ENCODE measurements at regions of chr4 and their contacts with region 1.

Region 1: DNA sequence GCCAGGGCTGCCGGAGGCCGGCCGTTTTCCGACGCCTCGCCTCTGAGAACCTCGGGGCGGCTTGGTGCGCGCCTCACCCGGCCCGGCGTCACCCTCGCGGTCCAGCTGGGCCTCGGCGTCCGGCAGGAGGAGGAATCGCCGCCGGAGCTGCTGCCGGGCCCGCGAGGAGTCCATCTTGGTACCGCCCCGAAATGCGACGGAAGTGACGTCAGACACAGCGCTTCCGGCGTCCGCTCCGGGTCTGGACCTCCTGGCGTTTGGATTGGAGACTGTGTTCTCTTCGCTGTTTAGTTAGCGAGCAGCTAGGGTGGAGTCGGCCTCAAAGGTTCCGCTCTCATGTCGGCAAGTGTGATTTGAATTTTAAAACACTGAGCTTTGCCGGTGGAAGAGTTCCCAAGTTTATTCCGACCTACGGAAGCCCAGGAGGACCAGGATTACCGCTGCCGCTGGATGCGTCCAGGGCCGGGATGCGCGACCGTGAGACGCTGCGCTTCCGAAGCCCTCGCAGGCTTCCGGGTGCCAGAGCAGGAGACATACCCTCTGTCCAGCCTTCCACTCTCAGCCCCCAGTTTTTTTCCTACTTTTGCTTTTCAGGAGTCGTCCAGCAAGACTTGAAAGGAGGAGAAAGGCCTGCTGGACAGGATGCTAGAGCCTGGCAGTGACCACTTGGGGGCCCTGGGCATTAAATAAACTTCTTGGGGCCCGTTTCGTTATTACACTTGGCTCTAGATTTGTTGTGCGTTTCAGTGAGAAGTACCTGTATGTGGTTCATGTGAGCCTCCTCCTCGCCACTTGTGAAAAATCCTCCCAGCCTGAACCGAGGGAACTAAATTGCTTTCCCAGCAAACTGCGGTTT is at the start of gene TMEM128:
- DNase-seq: peak; percentile 83 to 92 (median 90)
- ATAC-seq: peak; percentile 98
- H3K4me3 ChIP-seq: peak within 1 kb of the TSS; percentile 89
- H3K4me3 Mint-ChIP-seq: peak within 1 kb of the TSS; percentile 91 to 98 (median 96)
- H3K27ac ChIP-seq: peak within 1 kb of the TSS; percentile 84
- H3K27ac Mint-ChIP-seq: peak within 1 kb of the TSS; percentile 96 to 99 (median 98)
- H3K4me1 ChIP-seq: peaks cover 8 to 22% of the 10 kb centered on the region in 2 donors
- H3K4me1 Mint-ChIP-seq: peaks cover 24 to 54% (median 41%) of the 10 kb centered on the region in 7 donors
- H3K27me3 ChIP-seq: no peaks in the 10 kb centered on the region
- H3K27me3 Mint-ChIP-seq: peaks cover 0 to 7% (median 0%) of the 10 kb centered on the region in 5 donors
- total RNA-seq, gene TMEM128: 10.0 to 22.8 (median 17.8) TPM

Region 2: GRCh38 chr4:3945511-3946290 is 302.6 kb before region 1 on chr4:
- CTCF ChIA-PET with region 1: no interaction called
- POLR2A ChIA-PET with region 1: no interaction called
- intact Hi-C with region 1: loop called in 1 of 2 experiments (anchors 10 kb)
- DNase-seq: no peak
- ATAC-seq: no peak
- H3K4me3 ChIP-seq: no peak overlapping the region
- H3K4me3 Mint-ChIP-seq: no peak overlapping the region
- H3K27ac ChIP-seq: no peak overlapping the region
- H3K27ac Mint-ChIP-seq: no peak overlapping the region
- H3K4me1 ChIP-seq: no peaks in the 10 kb centered on the region
- H3K4me1 Mint-ChIP-seq: peaks cover 4 to 13% (median 11%) of the 10 kb centered on the region in 7 donors
- H3K27me3 ChIP-seq: no peaks in the 10 kb centered on the region
- H3K27me3 Mint-ChIP-seq: peaks cover 0 to 10% (median 0%) of the 10 kb centered on the region in 5 donors

Region 3: DNA sequence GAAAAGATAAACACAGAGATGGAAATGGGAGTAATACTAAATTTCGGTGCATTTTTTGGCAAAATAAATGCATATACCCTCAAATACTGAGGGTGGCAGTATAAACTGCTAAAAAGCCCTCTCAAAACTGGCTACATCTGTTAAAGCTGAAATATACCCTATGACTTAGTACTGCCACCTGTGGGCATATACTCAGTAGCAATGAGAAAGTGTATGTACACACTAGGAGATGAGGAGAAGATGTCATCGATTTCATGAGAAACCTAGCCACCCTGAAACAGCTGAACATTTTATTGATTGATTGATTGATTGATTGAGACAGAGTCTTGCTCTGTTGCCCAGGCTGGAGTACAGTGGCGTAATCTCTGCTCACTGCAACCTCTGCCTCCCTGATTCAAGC is 12.0 kb after region 1 on chr4:
- CTCF ChIA-PET with region 1: interaction called, 7 read pairs
- POLR2A ChIA-PET with region 1: interaction called, 10 read pairs
- intact Hi-C with region 1: loop called in 1 of 2 experiments (anchors 1 kb)
- DNase-seq: peak in 7 of 9 donors; percentile 9 to 57 (median 44)
- ATAC-seq: peak; percentile 100
- H3K4me3 ChIP-seq: no peak overlapping the region
- H3K4me3 Mint-ChIP-seq: no peak overlapping the region
- H3K27ac ChIP-seq: no peak overlapping the region
- H3K27ac Mint-ChIP-seq: peak overlapping the region in 1 of 9 donors; percentile 51
- H3K4me1 ChIP-seq: peaks cover 0 to 8% of the 10 kb centered on the region in 2 donors
- H3K4me1 Mint-ChIP-seq: peaks cover 0 to 4% (median 0%) of the 10 kb centered on the region in 7 donors
- H3K27me3 ChIP-seq: no peaks in the 10 kb centered on the region
- H3K27me3 Mint-ChIP-seq: peaks cover 0 to 5% (median 0%) of the 10 kb centered on the region in 5 donors

Region 4: GRCh38 chr4:4289941-4290850 is 41.9 kb after region 1 on chr4 and contains the starts of genes LYAR and ZBTB49:
- CTCF ChIA-PET with region 1: interaction called, 4 read pairs
- POLR2A ChIA-PET with region 1: interaction called, 12 read pairs
- intact Hi-C with region 1: loop called (anchors 1 kb)
- DNase-seq: peak; percentile 89 to 99 (median 96)
- ATAC-seq: peak; percentile 96
- H3K4me3 ChIP-seq: peak within 1 kb of the TSS; percentile 81
- H3K4me3 Mint-ChIP-seq: peak within 1 kb of the TSS; percentile 93 to 98 (median 96)
- H3K27ac ChIP-seq: peak within 1 kb of the TSS; percentile 79
- H3K27ac Mint-ChIP-seq: peak within 1 kb of the TSS; percentile 80 to 95 (median 92)
- H3K4me1 ChIP-seq: peaks cover 20 to 21% of the 10 kb centered on the region in 2 donors
- H3K4me1 Mint-ChIP-seq: peaks cover 40 to 77% (median 57%) of the 10 kb centered on the region in 7 donors
- H3K27me3 ChIP-seq: no peaks in the 10 kb centered on the region
- H3K27me3 Mint-ChIP-seq: no peaks in the 10 kb centered on the region
- total RNA-seq, gene LYAR: 11.1 to 27.4 (median 21.0) TPM
- total RNA-seq, gene ZBTB49: 6.3 to 16.1 (median 8.0) TPM

Region 5: DNA sequence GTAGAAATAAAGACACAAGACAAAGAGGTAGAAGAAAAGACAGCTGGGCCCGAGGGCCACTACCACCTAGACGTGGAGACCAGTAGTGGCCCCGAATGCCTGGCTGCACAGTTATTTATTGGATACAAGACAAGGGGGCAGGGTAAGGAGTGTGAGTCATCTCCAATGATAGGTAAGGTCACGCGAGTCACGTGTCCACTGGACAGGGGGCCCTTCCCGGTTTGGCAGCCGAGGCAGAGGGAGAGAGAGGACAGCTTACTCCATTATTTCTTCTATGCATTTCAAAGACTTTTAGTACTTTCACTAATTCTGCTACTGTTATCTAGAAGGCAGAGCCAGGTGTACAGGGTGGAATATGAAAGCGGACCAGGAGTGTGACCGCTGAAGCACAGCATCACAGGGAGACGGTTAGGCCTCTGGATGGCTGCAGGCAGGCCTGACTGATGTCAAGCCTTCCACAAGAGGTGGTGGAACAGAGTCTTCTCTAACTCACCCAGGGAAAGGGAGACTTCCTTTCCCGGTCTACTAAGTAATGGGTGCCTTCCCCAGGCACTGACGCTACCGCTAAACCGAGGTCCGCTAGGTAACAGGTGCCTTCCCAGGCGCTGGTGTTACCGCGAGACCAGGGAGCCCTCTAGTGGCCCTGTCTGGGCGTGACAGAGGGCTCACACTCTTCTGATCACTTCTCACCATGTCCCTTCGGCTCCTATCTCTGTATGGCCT is 86.7 kb after region 1 on chr4:
- CTCF ChIA-PET with region 1: interaction called, 16 read pairs
- POLR2A ChIA-PET with region 1: no interaction called
- intact Hi-C with region 1: loop called (anchors 1 kb)
- DNase-seq: peak; percentile 54 to 74 (median 64)
- ATAC-seq: peak; percentile 90
- H3K4me3 ChIP-seq: no peak overlapping the region
- H3K4me3 Mint-ChIP-seq: peak overlapping the region in 4 of 10 donors; percentile 33 to 60 (median 49)
- H3K27ac ChIP-seq: no peak overlapping the region
- H3K27ac Mint-ChIP-seq: peak overlapping the region in 3 of 9 donors; percentile 31 to 52 (median 52)
- H3K4me1 ChIP-seq: no peaks in the 10 kb centered on the region
- H3K4me1 Mint-ChIP-seq: peaks cover 0 to 11% (median 8%) of the 10 kb centered on the region in 7 donors
- H3K27me3 ChIP-seq: no peaks in the 10 kb centered on the region
- H3K27me3 Mint-ChIP-seq: no peaks in the 10 kb centered on the region

Region 6: GRCh38 chr4:4377732-4378460 is 129.6 kb after region 1 on chr4:
- CTCF ChIA-PET with region 1: no interaction called
- POLR2A ChIA-PET with region 1: no interaction called
- intact Hi-C with region 1: no loop called
- DNase-seq: no peak
- ATAC-seq: no peak
- H3K4me3 ChIP-seq: no peak overlapping the region
- H3K4me3 Mint-ChIP-seq: no peak overlapping the region
- H3K27ac ChIP-seq: no peak overlapping the region
- H3K27ac Mint-ChIP-seq: no peak overlapping the region
- H3K4me1 ChIP-seq: no peaks in the 10 kb centered on the region
- H3K4me1 Mint-ChIP-seq: no peaks in the 10 kb centered on the region
- H3K27me3 ChIP-seq: no peaks in the 10 kb centered on the region
- H3K27me3 Mint-ChIP-seq: peaks cover 10 to 35% (median 22%) of the 10 kb centered on the region in 5 donors

Region 7: GRCh38 chr4:4430492-4431197 is 182.4 kb after region 1 on chr4:
- CTCF ChIA-PET with region 1: interaction called, 4 read pairs
- POLR2A ChIA-PET with region 1: interaction called, 3 read pairs
- intact Hi-C with region 1: loop called (anchors 1 to 2 kb)
- DNase-seq: peak in 8 of 9 donors; percentile 11 to 53 (median 35)
- ATAC-seq: peak; percentile 87
- H3K4me3 ChIP-seq: no peak overlapping the region
- H3K4me3 Mint-ChIP-seq: no peak overlapping the region
- H3K27ac ChIP-seq: no peak overlapping the region
- H3K27ac Mint-ChIP-seq: no peak overlapping the region
- H3K4me1 ChIP-seq: no peaks in the 10 kb centered on the region
- H3K4me1 Mint-ChIP-seq: peaks cover 0 to 6% (median 3%) of the 10 kb centered on the region in 7 donors
- H3K27me3 ChIP-seq: no peaks in the 10 kb centered on the region
- H3K27me3 Mint-ChIP-seq: no peaks in the 10 kb centered on the region

Measured in naive thymus-derived CD4-positive, alpha-beta T cell (primary cell).